Vagina (tissue), 2 donors: ENCODE measurements at regions of chr2 and their contacts with region 1.

Region 1: GRCh38 chr2:42974721-42975717 is 182.6 kb upstream of the HAAO start:
- DNase-seq: no peak
- H3K4me3 ChIP-seq: peak overlapping the region; percentile 36 to 41
- H3K27ac ChIP-seq: peak overlapping the region; percentile 87
- H3K4me1 ChIP-seq: peaks cover 25% of the 10 kb centered on the region
- H3K27me3 ChIP-seq: no peaks in the 10 kb centered on the region
- CTCF ChIP-seq: peak; percentile 88 to 94 (median 91)
- POLR2A ChIP-seq: no peak

Region 2: DNA sequence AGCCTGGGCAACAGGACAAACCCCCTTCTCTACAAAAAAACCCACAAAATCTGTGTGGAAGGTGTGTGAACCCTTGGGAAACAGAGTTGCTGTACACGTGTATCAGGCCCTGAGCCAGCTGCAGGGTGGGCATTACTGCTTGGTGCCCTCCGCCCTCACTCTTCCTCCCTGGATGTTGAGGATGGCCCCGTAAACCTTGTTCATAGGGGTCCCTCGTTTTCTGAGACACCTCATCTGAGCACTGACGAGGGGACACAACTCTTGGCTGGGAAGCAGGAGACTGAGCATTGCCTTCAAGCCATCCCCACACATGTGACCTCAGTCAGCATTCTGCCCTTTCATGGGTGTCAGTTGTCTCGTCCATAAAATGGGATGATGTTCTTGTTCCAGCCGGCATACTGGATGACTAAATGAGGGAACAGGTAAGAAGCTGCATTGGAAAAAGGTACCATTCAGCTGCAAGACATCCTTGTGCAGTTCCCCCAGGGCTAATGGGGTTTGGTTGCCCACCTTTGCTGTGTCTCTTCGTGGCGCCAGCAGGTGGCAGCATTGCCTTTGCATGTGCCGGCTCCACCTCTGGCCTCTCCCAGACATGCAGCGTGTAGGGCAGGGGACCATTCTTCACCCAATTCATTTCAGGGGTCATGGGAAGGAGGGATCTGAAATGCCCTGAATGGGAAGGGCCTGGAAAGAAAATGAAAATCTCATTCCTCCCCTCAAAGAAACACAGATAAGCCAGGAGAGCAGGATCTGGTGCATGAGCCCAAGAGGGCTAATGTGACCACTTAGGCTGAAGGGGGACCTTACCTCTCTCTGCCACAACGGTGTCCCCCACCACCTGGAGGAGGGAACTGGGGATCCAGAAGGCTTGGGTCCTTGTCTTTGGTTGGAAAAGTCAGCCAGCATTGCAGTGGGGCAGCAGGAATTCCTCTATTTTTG is 146.3 kb before region 1 on chr2:
- intact Hi-C with region 1: loop called (anchors 1 kb)
- DNase-seq: peak; percentile 90 to 95
- H3K4me3 ChIP-seq: no peak overlapping the region
- H3K27ac ChIP-seq: peak overlapping the region; percentile 78
- H3K4me1 ChIP-seq: peaks cover 30% of the 10 kb centered on the region
- H3K27me3 ChIP-seq: no peaks in the 10 kb centered on the region
- CTCF ChIP-seq: peak; percentile 90 to 93 (median 90)
- POLR2A ChIP-seq: no peak

Region 3: GRCh38 chr2:43024515-43025011 is 49.5 kb after region 1 on chr2:
- intact Hi-C with region 1: loop called (anchors 5 kb)
- DNase-seq: no peak
- H3K4me3 ChIP-seq: no peak overlapping the region
- H3K27ac ChIP-seq: no peak overlapping the region
- H3K4me1 ChIP-seq: peaks cover 39% of the 10 kb centered on the region
- H3K27me3 ChIP-seq: no peaks in the 10 kb centered on the region
- CTCF ChIP-seq: peak; percentile 48 to 84 (median 76)
- POLR2A ChIP-seq: no peak

Region 4: GRCh38 chr2:43051316-43051715 is 76.3 kb after region 1 on chr2:
- intact Hi-C with region 1: no loop called
- DNase-seq: no peak
- H3K4me3 ChIP-seq: no peak overlapping the region
- H3K27ac ChIP-seq: no peak overlapping the region
- H3K4me1 ChIP-seq: peaks cover 23% of the 10 kb centered on the region
- H3K27me3 ChIP-seq: no peaks in the 10 kb centered on the region
- CTCF ChIP-seq: no peak
- POLR2A ChIP-seq: no peak

Region 5: GRCh38 chr2:43219383-43220228 is 244.6 kb after region 1 on chr2:
- intact Hi-C with region 1: loop called (anchors 2 kb)
- DNase-seq: peak in 1 of 2 donors; percentile 94
- H3K4me3 ChIP-seq: peak overlapping the region; percentile 97 to 99
- H3K27ac ChIP-seq: peak overlapping the region; percentile 99
- H3K4me1 ChIP-seq: peaks cover 45% of the 10 kb centered on the region
- H3K27me3 ChIP-seq: no peaks in the 10 kb centered on the region
- CTCF ChIP-seq: no peak
- POLR2A ChIP-seq: peak in 1 of 2 donors; percentile 5

Region 6: DNA sequence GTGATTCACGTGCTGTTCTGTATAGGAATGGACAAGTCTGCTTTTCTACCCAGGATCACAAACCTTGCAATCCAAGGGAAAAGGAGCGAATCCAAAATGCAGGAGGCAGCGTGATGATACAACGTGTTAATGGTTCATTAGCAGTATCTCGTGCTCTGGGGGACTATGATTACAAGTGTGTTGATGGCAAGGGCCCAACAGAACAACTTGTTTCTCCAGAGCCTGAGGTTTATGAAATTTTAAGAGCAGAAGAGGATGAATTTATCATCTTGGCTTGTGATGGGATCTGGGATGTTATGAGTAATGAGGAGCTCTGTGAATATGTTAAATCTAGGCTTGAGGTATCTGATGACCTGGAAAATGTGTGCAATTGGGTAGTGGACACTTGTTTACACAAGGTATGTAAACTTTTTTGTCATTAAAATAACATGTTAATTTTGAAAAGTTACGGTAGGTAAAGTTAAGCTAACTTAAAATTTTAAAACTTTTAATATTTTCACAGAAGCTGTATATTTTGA is 1226.7 kb after region 1 on chr2:
- intact Hi-C with region 1: no loop called
- DNase-seq: no peak
- H3K4me3 ChIP-seq: no peak overlapping the region
- H3K27ac ChIP-seq: no peak overlapping the region
- H3K4me1 ChIP-seq: peaks cover 12% of the 10 kb centered on the region
- H3K27me3 ChIP-seq: no peaks in the 10 kb centered on the region
- CTCF ChIP-seq: no peak
- POLR2A ChIP-seq: no peak